ENCODE measurements at regions of chr21 and their contacts with region 1.

Region 1: DNA sequence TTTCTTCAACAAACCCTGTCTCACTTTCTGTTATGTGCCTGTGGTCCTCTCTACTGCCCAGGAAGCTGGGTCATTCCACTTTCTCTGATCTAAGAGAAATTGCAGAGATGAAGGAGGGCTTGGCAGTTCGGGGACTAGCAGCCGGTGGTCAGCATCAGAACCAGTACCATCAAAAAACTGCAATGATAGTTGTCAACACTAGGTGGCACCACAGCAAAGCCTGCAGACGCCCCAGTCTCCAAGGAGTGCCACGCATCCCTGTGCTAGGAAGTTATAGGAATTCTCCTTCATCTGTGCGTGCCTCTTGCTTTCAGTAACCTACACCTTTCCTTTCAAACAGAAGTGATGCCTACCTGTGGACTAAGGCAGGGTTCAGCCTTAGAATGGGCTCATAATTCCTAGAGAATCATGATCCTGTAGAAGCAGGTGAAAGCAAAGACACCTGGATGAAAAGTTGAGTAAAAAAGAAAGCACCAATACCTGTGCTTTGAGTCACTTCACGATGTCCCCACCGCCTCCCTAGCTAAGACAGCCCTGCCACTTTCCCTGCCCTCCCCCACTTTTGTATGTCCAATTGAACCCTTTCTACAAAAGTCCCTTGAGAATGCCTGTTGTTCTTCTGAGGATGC is 129.2 kb downstream of the ADAMTS1 start:
- DNase-seq: peak in 1 of 2 donors; percentile 48
- ATAC-seq: peak in 6 of 8 donors; percentile 58 to 84 (median 71)
- H3K4me3 ChIP-seq: no peak overlapping the region
- H3K27ac ChIP-seq: no peak overlapping the region
- H3K4me1 ChIP-seq: peaks cover 0 to 6% (median 0%) of the 10 kb centered on the region in 9 donors
- H3K27me3 ChIP-seq: peaks cover 0 to 6% (median 0%) of the 10 kb centered on the region in 7 donors
- CTCF ChIP-seq: peak; percentile 58 to 91 (median 80)

Region 2: DNA sequence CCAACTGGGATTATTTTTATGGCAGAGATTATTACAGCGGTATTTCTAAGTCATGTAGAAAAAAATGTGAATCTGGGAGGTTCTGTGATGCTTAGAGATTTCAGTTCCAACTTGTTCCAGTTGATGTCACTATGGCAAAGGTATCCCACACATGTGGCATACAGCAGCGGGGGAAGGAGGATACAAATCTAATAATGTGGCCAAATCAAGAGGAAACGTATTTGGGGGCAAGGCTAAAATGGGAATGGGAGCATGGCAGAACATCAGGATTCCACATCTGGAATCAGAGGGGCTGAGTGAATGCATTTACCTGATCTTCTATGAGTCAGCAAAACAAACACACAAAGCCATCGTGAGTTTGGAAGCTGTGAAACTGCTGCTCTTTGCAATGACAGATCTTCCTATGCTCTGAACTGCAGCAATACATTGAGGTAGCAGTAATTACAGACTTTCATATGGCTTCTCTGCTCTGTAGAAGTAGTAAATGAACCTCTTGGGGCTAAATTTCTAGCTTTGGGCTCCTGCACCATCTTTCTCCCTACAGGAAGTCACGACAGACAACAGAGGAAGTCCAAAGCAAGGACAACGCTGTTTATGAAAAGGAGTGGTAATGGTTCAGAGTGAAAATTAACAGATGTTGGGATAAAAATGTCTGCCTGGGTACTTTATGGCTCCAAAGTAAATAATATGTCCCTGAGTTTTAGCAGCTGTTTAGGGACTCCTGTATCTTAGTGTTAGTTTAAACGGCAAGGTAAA is 925.7 kb before region 1 on chr21:
- intact Hi-C with region 1: loop called in 1 of 10 experiments (anchors 10 kb)
- DNase-seq: no peak
- ATAC-seq: peak in 7 of 8 donors; percentile 53 to 78 (median 68)
- H3K4me3 ChIP-seq: peak overlapping the region in 9 of 10 donors; percentile 8 to 47 (median 35)
- H3K27ac ChIP-seq: peak overlapping the region in 5 of 10 donors; percentile 4 to 48 (median 18)
- H3K4me1 ChIP-seq: peaks cover 0 to 11% (median 8%) of the 10 kb centered on the region in 9 donors
- H3K27me3 ChIP-seq: peaks cover 0 to 12% (median 0%) of the 10 kb centered on the region in 7 donors
- CTCF ChIP-seq: peak in 8 of 9 donors; percentile 15 to 57 (median 48)

Region 3: DNA sequence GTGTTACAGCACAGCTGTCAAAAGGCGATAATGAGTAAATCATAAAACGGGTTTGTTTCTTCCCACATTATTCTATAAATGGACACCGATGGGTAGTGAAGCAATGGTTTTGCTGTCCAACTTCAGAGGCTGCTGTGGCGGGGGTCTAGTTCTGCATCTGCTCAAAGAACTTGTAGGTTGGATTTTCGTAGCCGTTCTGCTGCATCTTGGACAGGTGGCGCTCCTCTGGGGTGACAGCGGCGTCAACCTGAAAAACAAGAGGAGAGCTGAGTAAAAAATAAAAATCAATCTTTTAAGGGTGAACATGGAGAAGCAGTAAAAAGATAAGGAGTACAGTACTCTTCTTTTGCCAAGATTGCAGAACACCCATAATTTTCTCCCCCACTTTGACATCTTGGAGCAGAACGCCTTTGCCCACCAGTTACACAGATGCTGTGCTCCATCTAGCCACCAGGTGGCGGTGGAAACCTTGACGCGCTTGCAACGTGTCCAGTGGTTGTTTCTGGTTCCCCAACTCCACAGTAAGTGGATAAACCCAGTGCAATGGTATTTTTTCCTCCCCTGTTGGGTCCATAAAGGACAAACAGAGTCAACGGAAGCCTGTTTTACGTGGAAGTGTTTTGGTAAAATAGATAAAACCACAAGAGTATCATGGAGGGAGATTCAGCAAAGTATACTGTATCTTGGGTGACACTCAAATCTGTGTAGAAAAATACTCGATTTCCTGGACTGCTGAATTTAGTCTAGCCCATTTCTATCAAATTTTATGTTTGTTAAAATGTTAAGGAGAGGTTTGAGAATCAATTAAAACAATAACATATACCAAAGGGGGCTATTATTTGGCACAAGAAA is 834.2 kb before region 1 on chr21:
- intact Hi-C with region 1: loop called (anchors 2 to 10 kb)
- DNase-seq: peak; percentile 63 to 65
- ATAC-seq: peak; percentile 63 to 85 (median 72)
- H3K4me3 ChIP-seq: no peak overlapping the region
- H3K27ac ChIP-seq: no peak overlapping the region
- H3K4me1 ChIP-seq: peaks cover 0 to 17% (median 8%) of the 10 kb centered on the region in 9 donors
- H3K27me3 ChIP-seq: no peaks in the 10 kb centered on the region
- CTCF ChIP-seq: peak; percentile 88 to 98 (median 96)

Region 4: GRCh38 chr21:25887166-25887565 is 828.8 kb before region 1 on chr21:
- intact Hi-C with region 1: loop called in 9 of 10 experiments (anchors 2 to 10 kb)
- DNase-seq: no peak
- ATAC-seq: no peak
- H3K4me3 ChIP-seq: no peak overlapping the region
- H3K27ac ChIP-seq: no peak overlapping the region
- H3K4me1 ChIP-seq: peaks cover 0 to 30% (median 12%) of the 10 kb centered on the region in 9 donors
- H3K27me3 ChIP-seq: no peaks in the 10 kb centered on the region
- CTCF ChIP-seq: no peak

Region 5: GRCh38 chr21:26490771-26491170 is 225.2 kb before region 1 on chr21:
- intact Hi-C with region 1: no loop called
- DNase-seq: no peak
- ATAC-seq: no peak
- H3K4me3 ChIP-seq: no peak overlapping the region
- H3K27ac ChIP-seq: no peak overlapping the region
- H3K4me1 ChIP-seq: peaks cover 0 to 4% (median 0%) of the 10 kb centered on the region in 9 donors
- H3K27me3 ChIP-seq: no peaks in the 10 kb centered on the region
- CTCF ChIP-seq: no peak

Region 6: GRCh38 chr21:26659182-26659581 is 56.8 kb before region 1 on chr21:
- intact Hi-C with region 1: no loop called
- DNase-seq: no peak
- ATAC-seq: no peak
- H3K4me3 ChIP-seq: no peak overlapping the region
- H3K27ac ChIP-seq: no peak overlapping the region
- H3K4me1 ChIP-seq: no peaks in the 10 kb centered on the region
- H3K27me3 ChIP-seq: no peaks in the 10 kb centered on the region
- CTCF ChIP-seq: no peak